Activated naive CD4-positive, alpha-beta T cell treated with anti-CD3 and anti-CD28 coated beads for 36 hours (primary cell): ENCODE measurements at regions of chr11 and their contacts with region 1.

Region 1: DNA sequence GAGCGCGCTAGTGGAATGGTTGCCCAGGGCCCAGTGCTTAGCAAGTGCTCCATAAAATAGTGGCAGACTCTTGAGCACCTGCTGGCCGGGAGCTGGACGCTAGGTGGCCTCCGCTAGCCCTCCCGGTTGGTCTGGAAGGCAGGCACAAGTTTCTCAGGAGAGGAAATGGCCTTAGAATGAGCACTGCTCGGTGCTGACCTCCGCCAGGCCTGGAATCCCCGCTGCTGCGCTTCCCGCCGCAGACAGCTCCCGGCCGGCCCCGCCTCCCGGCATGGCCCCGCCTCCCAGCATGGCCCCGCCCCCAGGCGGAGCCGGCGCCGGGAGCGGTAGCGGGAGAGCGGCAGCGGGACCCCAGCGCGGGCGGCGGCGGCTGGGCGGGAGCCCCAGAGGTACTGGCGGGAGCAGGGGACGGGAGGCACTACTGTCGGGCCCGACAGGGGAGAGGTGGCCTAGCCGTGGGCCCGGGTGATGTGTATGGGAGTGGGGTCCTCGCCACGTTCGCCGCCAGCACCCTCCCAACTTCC is at the start of gene SIPA1:
- DNase-seq: peak; percentile 71
- H3K4me3 Mint-ChIP-seq: peak within 1 kb of the TSS; percentile 88
- H3K27ac Mint-ChIP-seq: peak within 1 kb of the TSS; percentile 91
- H3K4me1 Mint-ChIP-seq: peaks cover 44% of the 10 kb centered on the region
- H3K27me3 Mint-ChIP-seq: no peaks in the 10 kb centered on the region
- total RNA-seq, gene SIPA1: 146 to 150 TPM

Region 2: DNA sequence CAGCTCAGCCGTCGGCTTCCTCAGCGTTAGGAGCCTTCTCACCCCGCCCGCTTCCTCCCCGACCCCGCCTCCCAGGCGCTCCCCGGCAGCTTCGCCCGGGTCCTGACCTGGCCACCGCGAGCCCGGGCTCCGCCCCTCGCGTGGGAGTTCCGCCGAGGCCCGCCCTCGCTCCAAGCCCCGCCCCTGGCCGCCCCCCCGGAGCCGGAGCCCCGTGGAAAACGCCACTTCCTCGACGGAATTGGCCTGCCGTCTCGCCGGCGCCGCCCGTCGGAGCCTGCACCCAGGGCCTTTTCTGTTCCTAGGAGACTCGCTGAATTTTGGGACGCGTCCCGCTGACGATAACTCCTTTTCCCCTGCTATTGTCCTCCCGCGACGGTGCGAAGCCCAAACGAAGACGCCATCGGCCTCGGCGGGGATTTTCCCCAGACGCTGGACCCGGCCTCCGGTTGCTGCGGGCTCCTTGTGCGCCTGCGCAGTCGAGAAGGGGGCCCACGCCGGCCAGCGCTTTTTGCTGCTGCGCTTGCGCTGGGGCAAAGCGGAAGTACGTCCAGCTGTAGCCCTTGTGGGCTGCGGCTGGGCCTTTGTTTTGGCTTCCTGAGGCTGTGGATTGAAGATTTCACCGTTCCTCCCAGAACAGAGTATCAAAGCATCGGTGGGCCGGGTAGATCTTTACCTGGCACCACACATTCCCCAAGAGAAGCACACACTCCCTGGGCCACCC is 14.8 kb after region 1 on chr11:
- CTCF ChIA-PET with region 1: interaction called, 4 read pairs
- intact Hi-C with region 1: loop called (anchors 1 kb)
- DNase-seq: peak; percentile 95
- H3K4me3 Mint-ChIP-seq: peak overlapping the region; percentile 80
- H3K27ac Mint-ChIP-seq: peak overlapping the region; percentile 94
- H3K4me1 Mint-ChIP-seq: peaks cover 46% of the 10 kb centered on the region
- H3K27me3 Mint-ChIP-seq: no peaks in the 10 kb centered on the region

Region 3: GRCh38 chr11:65662799-65663638 is 25.2 kb after region 1 on chr11 and contains the start of gene RELA:
- CTCF ChIA-PET with region 1: interaction called, 4 read pairs
- intact Hi-C with region 1: loop called (anchors 1 kb)
- DNase-seq: peak; percentile 95
- H3K4me3 Mint-ChIP-seq: peak within 1 kb of the TSS; percentile 85
- H3K27ac Mint-ChIP-seq: peak within 1 kb of the TSS; percentile 94
- H3K4me1 Mint-ChIP-seq: peaks cover 37% of the 10 kb centered on the region
- H3K27me3 Mint-ChIP-seq: no peaks in the 10 kb centered on the region
- total RNA-seq, gene RELA: 66.9 to 68.5 TPM